ENCODE measurements at regions of chr6 and their contacts with region 1.

Region 1: DNA sequence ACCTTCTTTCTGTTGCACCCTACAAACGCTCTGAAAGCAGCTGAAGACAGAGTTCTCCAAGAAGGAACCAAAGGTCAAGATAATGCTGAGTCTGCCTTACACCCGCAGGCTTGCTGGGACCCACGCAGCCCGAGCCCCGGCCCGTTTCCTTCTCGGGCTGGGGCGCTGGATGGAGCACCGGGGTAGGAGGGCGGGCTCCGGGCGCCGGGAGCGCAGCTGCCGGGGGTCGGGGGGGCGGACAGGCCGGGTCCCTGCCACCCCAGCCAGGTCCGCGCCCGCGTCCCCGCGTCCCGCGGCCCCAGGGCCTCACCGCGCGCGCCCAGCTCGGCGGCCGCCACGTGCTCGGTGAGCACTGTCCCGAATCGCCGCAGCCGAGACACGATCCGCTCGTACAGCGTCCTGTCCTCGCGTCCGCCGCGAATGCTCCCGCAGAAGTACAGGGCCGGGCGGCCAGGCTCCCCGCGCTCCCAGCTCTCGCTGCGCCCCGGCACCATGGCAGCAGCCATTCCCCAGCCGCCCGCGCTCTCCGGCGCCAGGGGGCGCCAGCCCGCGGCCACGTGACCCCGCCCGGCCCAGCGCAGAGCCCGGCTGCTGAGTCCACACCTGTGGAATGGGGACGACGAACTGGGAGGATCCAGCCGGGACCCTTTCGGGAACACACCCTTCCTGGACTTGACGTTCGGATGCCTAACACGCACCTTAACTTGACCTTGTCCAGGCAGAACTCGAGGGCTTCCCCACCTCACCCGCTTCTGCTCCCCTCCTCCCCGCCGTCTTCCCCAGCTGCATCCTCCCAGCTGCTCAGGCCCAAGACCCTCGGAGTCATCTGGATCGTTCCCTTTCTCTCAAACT is at the start of gene DNPH1:
- DNase-seq: peak; percentile 69
- H3K4me3 Mint-ChIP-seq: peak within 1 kb of the TSS; percentile 76
- H3K27ac Mint-ChIP-seq: peak within 1 kb of the TSS; percentile 68
- H3K4me1 Mint-ChIP-seq: no peaks in the 10 kb centered on the region
- H3K27me3 Mint-ChIP-seq: peaks cover 12% of the 10 kb centered on the region
- CTCF ChIP-seq: peak; percentile 89
- total RNA-seq, gene DNPH1: 52.5 and 91.0 TPM in 2 replicates

Region 2: DNA sequence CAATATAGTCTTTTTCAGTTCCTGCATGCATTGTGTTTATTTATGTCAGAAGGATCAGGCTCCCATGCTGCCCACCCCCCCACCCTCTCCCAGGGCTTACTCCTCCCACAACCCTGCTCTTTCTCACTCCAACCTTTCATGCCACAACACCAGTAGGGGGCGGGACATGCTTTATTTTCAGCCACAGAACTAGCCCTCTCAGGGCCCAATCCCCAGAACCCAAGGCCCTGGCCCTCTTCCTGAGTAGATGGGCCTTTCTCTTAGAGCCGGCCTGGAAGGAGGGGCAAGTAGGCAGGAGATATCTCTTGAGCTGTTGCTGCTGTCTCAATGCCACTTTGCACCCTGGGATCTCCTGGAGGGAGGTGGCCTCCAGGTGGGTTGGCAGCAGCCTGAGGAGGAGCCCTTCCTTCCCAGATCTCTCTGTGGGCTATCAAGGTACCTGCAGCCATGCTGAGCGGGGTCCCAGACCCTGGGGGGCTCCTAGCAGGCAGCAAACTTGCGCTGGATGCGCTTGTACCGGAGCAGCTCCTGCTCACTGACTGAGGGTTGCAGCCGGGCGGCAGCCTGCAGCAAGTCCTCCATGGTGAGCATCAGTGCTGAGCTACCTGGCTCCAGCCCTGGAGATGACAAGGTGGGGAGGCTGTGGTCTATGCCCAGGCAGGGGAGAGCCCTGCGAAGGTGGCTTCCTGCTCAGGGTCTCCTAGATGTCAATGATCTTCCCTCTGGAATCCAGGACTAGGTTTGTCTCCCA is 265.1 kb before region 1 on chr6:
- CTCF ChIA-PET with region 1: no interaction called
- POLR2A ChIA-PET with region 1: no interaction called
- intact Hi-C with region 1: no loop called
- DNase-seq: peak; percentile 61
- H3K4me3 Mint-ChIP-seq: no peak overlapping the region
- H3K27ac Mint-ChIP-seq: no peak overlapping the region
- H3K4me1 Mint-ChIP-seq: peaks cover 7% of the 10 kb centered on the region
- H3K27me3 Mint-ChIP-seq: no peaks in the 10 kb centered on the region
- CTCF ChIP-seq: no peak

Region 3: GRCh38 chr6:43174263-43175112 is 54.7 kb before region 1 on chr6:
- CTCF ChIA-PET with region 1: interaction called, 4 read pairs
- POLR2A ChIA-PET with region 1: interaction called, 11 read pairs
- intact Hi-C with region 1: loop called (anchors 2 kb)
- DNase-seq: peak; percentile 99
- H3K4me3 Mint-ChIP-seq: peak overlapping the region; percentile 87
- H3K27ac Mint-ChIP-seq: peak overlapping the region; percentile 83
- H3K4me1 Mint-ChIP-seq: peaks cover 30% of the 10 kb centered on the region
- H3K27me3 Mint-ChIP-seq: no peaks in the 10 kb centered on the region
- CTCF ChIP-seq: no peak

Region 4: GRCh38 chr6:43200541-43200940 is 28.6 kb before region 1 on chr6:
- CTCF ChIA-PET with region 1: interaction called, 12 read pairs
- POLR2A ChIA-PET with region 1: interaction called, 3 read pairs
- intact Hi-C with region 1: no loop called
- DNase-seq: no peak
- H3K4me3 Mint-ChIP-seq: no peak overlapping the region
- H3K27ac Mint-ChIP-seq: no peak overlapping the region
- H3K4me1 Mint-ChIP-seq: no peaks in the 10 kb centered on the region
- H3K27me3 Mint-ChIP-seq: no peaks in the 10 kb centered on the region
- CTCF ChIP-seq: no peak

Region 5: GRCh38 chr6:43240950-43241349 is 11.8 kb after region 1 on chr6:
- CTCF ChIA-PET with region 1: interaction called, 13 read pairs
- POLR2A ChIA-PET with region 1: no interaction called
- intact Hi-C with region 1: no loop called
- DNase-seq: no peak
- H3K4me3 Mint-ChIP-seq: no peak overlapping the region
- H3K27ac Mint-ChIP-seq: no peak overlapping the region
- H3K4me1 Mint-ChIP-seq: no peaks in the 10 kb centered on the region
- H3K27me3 Mint-ChIP-seq: no peaks in the 10 kb centered on the region
- CTCF ChIP-seq: no peak

Measured in MCF 10A (cell line).